Left cardiac atrium (tissue), 4 donors: ENCODE measurements at regions of chr19 and their contacts with region 1.

Region 1: GRCh38 chr19:9538183-9539058 is at the start of gene ZNF426:
- DNase-seq: peak; percentile 91
- ATAC-seq: peak; percentile 98
- total RNA-seq, gene ZNF426: 12.1 to 16.0 TPM

Region 2: DNA sequence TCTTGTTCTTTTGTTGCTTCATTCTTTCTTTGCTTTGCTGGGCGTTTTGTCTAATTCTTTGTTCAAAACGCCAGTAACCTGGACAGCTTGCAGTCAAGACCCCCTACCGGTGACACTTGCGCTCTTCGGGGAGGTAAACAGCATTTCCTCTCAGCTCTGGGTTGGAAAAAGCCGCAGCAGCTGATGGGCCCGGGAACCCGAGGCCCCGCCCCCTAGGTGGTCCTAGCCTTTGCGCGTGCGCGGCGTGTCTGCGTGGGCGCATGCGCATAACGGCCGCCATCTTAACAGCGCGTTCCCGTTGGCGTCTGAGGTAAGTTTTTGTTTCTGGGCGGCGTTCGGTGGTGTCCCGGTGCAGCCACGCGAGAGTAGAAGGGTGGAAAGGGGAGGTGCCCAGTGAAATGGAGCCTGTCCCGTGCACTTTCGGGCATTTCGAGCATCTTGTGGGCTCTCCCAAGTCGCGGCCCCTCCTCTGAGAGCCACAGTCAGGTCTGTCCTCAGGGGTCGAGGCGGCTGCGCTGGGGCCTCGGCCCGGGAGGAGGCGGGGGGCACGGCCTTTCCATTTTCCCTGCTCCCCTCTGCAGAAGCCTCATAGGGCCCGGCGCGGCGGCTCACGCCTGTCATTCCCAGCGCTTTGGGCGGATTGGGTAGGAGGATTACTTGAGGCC is 214.4 kb before region 1 on chr19 and contains the start of gene ZNF559:
- intact Hi-C with region 1: loop called in 1 of 2 experiments (anchors 10 kb)
- DNase-seq: peak; percentile 94
- ATAC-seq: peak; percentile 98
- total RNA-seq, gene ZNF559: 13.6 to 14.7 TPM